GM12878 (cell line): ENCODE measurements at regions of chr4 and their contacts with region 1.

Region 1: GRCh38 chr4:44760142-44760898 is 34.0 kb upstream of the GNPDA2 start:
- DNase-seq: no peak
- ATAC-seq: peak; percentile 82
- H3K4me3 ChIP-seq: no peak overlapping the region
- H3K27ac ChIP-seq: no peak overlapping the region
- H3K4me1 ChIP-seq: no peaks in the 10 kb centered on the region
- H3K27me3 ChIP-seq: no peaks in the 10 kb centered on the region
- CTCF ChIP-seq: peak; percentile 18 to 39 (median 38); a peak in 5 of 6 replicates
- EP300 ChIP-seq: no peak
- POLR2A ChIP-seq: no peak
- RAD21 ChIP-seq: peak; percentile 52

Region 2: GRCh38 chr4:44684648-44685047 is 75.7 kb before region 1 on chr4:
- CTCF ChIA-PET with region 1: no interaction called
- POLR2A ChIA-PET with region 1: no interaction called
- RAD21 ChIA-PET with region 1: no interaction called
- SMC1A ChIA-PET with region 1: no interaction called
- in situ Hi-C with region 1: no loop called
- intact Hi-C with region 1: no loop called
- DNase-seq: no peak
- ATAC-seq: no peak
- H3K4me3 ChIP-seq: no peak overlapping the region
- H3K27ac ChIP-seq: no peak overlapping the region
- H3K4me1 ChIP-seq: no peaks in the 10 kb centered on the region; the same call in 1 of the 2 replicates
- H3K27me3 ChIP-seq: no peaks in the 10 kb centered on the region
- CTCF ChIP-seq: no peak
- EP300 ChIP-seq: no peak
- POLR2A ChIP-seq: no peak
- RAD21 ChIP-seq: no peak

Region 3: DNA sequence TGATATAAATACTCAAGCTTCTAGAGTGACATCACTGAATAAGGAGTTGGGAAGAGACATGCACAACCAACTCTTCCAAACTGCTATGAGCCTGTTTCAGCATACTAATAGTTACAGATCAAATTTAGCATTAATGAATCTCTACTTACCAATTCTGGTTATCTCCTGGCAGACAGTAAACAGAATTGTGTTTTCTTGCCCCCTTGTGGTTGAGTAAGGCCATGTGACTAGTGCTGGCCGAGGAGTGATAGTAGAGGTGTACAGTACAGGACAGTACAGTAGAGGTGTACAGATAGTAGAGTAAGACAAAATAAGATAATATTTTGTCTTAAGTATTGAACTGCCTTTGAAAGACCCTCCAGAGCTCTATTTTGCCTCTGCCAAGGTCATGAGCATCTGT is 682.1 kb after region 1 on chr4:
- CTCF ChIA-PET with region 1: interaction called, 7 read pairs
- POLR2A ChIA-PET with region 1: no interaction called
- RAD21 ChIA-PET with region 1: no interaction called
- SMC1A ChIA-PET with region 1: no interaction called
- in situ Hi-C with region 1: no loop called
- intact Hi-C with region 1: loop called (anchors 5 kb)
- DNase-seq: no peak
- ATAC-seq: peak; percentile 84
- H3K4me3 ChIP-seq: no peak overlapping the region
- H3K27ac ChIP-seq: no peak overlapping the region
- H3K4me1 ChIP-seq: no peaks in the 10 kb centered on the region
- H3K27me3 ChIP-seq: no peaks in the 10 kb centered on the region
- CTCF ChIP-seq: peak in 2 of 3 experiments; percentile 33; a peak in 2 of 6 replicates
- EP300 ChIP-seq: no peak
- POLR2A ChIP-seq: no peak
- RAD21 ChIP-seq: peak; percentile 76

Region 4: DNA sequence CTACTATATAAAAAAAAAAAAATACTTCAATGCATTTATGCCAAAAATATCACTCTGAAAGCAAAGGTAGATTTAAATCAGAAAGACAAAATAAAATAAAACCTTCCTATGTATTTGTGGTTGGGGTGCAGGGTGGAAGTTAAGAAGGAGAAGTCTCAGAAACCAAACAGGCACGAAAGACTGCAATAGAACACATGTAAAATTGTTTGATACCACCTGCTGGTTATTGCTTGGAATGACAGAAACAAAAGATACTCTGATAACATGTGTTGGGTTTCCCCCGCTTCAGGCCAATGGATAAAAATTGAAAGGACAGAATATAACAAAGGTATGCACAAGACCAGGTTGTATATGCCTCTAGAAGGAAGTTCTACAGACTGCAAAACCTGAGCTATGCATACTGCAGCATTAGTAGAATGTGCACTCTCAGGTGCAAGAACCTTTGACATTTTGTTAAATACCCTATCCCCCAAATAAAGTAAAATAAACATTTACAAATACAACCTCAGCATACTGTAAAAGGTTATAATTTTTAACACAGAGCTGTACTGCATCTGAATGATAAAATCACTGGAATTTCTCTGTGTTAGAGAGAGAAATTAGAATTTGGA is 1510.8 kb after region 1 on chr4:
- CTCF ChIA-PET with region 1: interaction called, 3 read pairs
- POLR2A ChIA-PET with region 1: no interaction called
- RAD21 ChIA-PET with region 1: no interaction called
- SMC1A ChIA-PET with region 1: interaction called, 3 read pairs
- in situ Hi-C with region 1: loop called (anchors 5 kb)
- intact Hi-C with region 1: loop called (anchors 5 kb)
- DNase-seq: peak; percentile 4
- ATAC-seq: peak; percentile 84
- H3K4me3 ChIP-seq: no peak overlapping the region
- H3K27ac ChIP-seq: no peak overlapping the region
- H3K4me1 ChIP-seq: no peaks in the 10 kb centered on the region
- H3K27me3 ChIP-seq: no peaks in the 10 kb centered on the region
- CTCF ChIP-seq: peak; percentile 36 to 52 (median 49); a peak in 4 of 6 replicates
- EP300 ChIP-seq: no peak
- POLR2A ChIP-seq: no peak
- RAD21 ChIP-seq: peak; percentile 54

Region 5: GRCh38 chr4:46648088-46648744 is 1887.9 kb after region 1 on chr4:
- CTCF ChIA-PET with region 1: interaction called, 15 read pairs
- POLR2A ChIA-PET with region 1: no interaction called
- RAD21 ChIA-PET with region 1: interaction called, 5 read pairs
- SMC1A ChIA-PET with region 1: interaction called, 6 read pairs
- in situ Hi-C with region 1: loop called (anchors 25 kb)
- intact Hi-C with region 1: loop called (anchors 5 kb)
- DNase-seq: no peak
- ATAC-seq: peak; percentile 99
- H3K4me3 ChIP-seq: no peak overlapping the region
- H3K27ac ChIP-seq: no peak overlapping the region
- H3K4me1 ChIP-seq: no peaks in the 10 kb centered on the region
- H3K27me3 ChIP-seq: no peaks in the 10 kb centered on the region
- CTCF ChIP-seq: peak; percentile 66 to 80 (median 75)
- EP300 ChIP-seq: no peak
- POLR2A ChIP-seq: no peak
- RAD21 ChIP-seq: peak; percentile 75

Region 6: GRCh38 chr4:46656071-46656470 is 1895.8 kb after region 1 on chr4:
- CTCF ChIA-PET with region 1: no interaction called
- POLR2A ChIA-PET with region 1: no interaction called
- RAD21 ChIA-PET with region 1: no interaction called
- SMC1A ChIA-PET with region 1: no interaction called
- in situ Hi-C with region 1: loop called (anchors 25 kb)
- intact Hi-C with region 1: no loop called
- DNase-seq: no peak
- ATAC-seq: peak; percentile 58
- H3K4me3 ChIP-seq: no peak overlapping the region
- H3K27ac ChIP-seq: no peak overlapping the region
- H3K4me1 ChIP-seq: no peaks in the 10 kb centered on the region
- H3K27me3 ChIP-seq: no peaks in the 10 kb centered on the region
- CTCF ChIP-seq: no peak
- EP300 ChIP-seq: no peak
- POLR2A ChIP-seq: no peak
- RAD21 ChIP-seq: no peak